ENCODE measurements at regions of chr4 and their contacts with region 1.

Region 1: GRCh38 chr4:101103381-101104142 is 243.8 kb downstream of the PPP3CA start:
- DNase-seq: no peak
- H3K4me3 Mint-ChIP-seq: no peak overlapping the region
- H3K27ac Mint-ChIP-seq: no peak overlapping the region
- H3K4me1 Mint-ChIP-seq: peaks cover 21% of the 10 kb centered on the region
- H3K27me3 Mint-ChIP-seq: no peaks in the 10 kb centered on the region

Region 2: GRCh38 chr4:101037938-101038413 is 65.6 kb before region 1 on chr4:
- CTCF ChIA-PET with region 1: no interaction called
- intact Hi-C with region 1: loop called (anchors 1 kb)
- DNase-seq: no peak
- H3K4me3 Mint-ChIP-seq: no peak overlapping the region
- H3K27ac Mint-ChIP-seq: no peak overlapping the region
- H3K4me1 Mint-ChIP-seq: peaks cover 13% of the 10 kb centered on the region
- H3K27me3 Mint-ChIP-seq: no peaks in the 10 kb centered on the region

Region 3: DNA sequence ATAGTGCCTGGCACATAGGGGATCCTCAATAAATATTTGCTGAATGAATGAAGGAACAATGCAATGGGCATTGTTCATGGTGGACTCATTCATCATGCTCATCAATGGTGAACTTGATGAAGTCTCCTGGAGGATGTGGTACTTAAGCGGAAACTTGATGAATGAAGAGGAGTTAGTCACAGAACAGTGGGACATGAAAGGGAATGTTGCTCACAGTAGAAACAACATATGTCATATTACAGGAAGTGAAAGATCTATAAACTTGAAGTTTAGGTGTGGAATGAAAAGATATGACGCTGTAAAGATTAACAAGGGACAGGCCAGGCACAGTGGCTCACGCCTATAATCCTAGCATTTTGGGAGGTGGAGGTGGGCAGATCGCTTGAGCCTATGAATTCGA is 19.7 kb after region 1 on chr4:
- CTCF ChIA-PET with region 1: interaction called, 3 read pairs
- intact Hi-C with region 1: loop called (anchors 1 kb)
- DNase-seq: no peak
- H3K4me3 Mint-ChIP-seq: no peak overlapping the region
- H3K27ac Mint-ChIP-seq: no peak overlapping the region
- H3K4me1 Mint-ChIP-seq: peaks cover 29% of the 10 kb centered on the region
- H3K27me3 Mint-ChIP-seq: no peaks in the 10 kb centered on the region

Region 4: GRCh38 chr4:101156619-101157310 is 53.2 kb after region 1 on chr4:
- CTCF ChIA-PET with region 1: no interaction called
- intact Hi-C with region 1: loop called (anchors 1 kb)
- DNase-seq: no peak
- H3K4me3 Mint-ChIP-seq: no peak overlapping the region
- H3K27ac Mint-ChIP-seq: no peak overlapping the region
- H3K4me1 Mint-ChIP-seq: peaks cover 28% of the 10 kb centered on the region
- H3K27me3 Mint-ChIP-seq: no peaks in the 10 kb centered on the region